T-cell (primary cell): ENCODE measurements at regions of chr1 and their contacts with region 1.

Region 1: GRCh38 chr1:24201941-24202440 is 14.9 kb upstream of the IFNLR1 start:
- DNase-seq: peak in 30 of 35 experiments; percentile 10 to 74 (median 38)
- ATAC-seq: peak in 3 of 4 experiments; percentile 35 to 54 (median 51)
- H3K4me3 ChIP-seq: no peak overlapping the region
- H3K4me3 Mint-ChIP-seq: no peak overlapping the region
- H3K27ac ChIP-seq: no peak overlapping the region
- H3K27ac Mint-ChIP-seq: no peak overlapping the region
- H3K4me1 ChIP-seq: peaks cover 4 to 7% of the 10 kb centered on the region in 2 experiments
- H3K4me1 Mint-ChIP-seq: peaks cover 5 to 13% (median 7%) of the 10 kb centered on the region in 3 donors
- H3K27me3 ChIP-seq: peaks cover 0 to 18% of the 10 kb centered on the region in 2 experiments
- H3K27me3 Mint-ChIP-seq: no peaks in the 10 kb centered on the region

Region 2: DNA sequence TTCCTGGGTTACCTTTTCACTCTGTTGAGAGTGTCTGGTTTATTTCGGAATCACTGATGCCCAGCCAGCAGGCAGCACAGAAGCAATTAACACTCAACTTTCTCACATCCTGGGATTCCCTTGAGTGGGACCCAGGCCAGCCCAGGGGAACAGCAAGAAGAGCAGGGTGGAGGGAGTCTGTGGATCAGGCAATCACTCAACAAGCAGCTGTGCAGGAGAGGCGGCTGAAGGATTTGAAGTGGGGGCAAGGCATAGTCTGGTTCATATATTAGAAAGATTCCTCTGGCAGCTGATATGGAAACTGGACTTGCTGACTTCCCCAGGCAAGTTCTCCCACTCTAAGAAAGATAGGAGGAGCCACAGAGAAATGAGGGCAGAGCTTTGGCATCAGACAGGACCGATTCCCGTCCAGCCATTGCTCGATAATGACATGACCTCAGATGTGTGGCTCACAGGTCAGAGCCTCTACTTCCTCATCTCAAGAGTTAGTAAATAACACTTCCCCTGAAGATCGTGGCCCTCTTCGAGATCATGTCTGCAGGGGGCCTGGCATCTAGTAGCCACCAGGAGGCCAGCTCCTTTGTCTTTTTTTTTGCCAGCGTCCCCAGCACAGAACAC is 1626.3 kb before region 1 on chr1:
- CTCF ChIA-PET with region 1: no interaction called
- POLR2A ChIA-PET with region 1: no interaction called
- DNase-seq: no peak
- ATAC-seq: no peak
- H3K4me3 ChIP-seq: no peak overlapping the region
- H3K4me3 Mint-ChIP-seq: no peak overlapping the region
- H3K27ac ChIP-seq: no peak overlapping the region
- H3K27ac Mint-ChIP-seq: no peak overlapping the region
- H3K4me1 ChIP-seq: no peaks in the 10 kb centered on the region
- H3K4me1 Mint-ChIP-seq: peaks cover 0 to 6% (median 0%) of the 10 kb centered on the region in 3 donors
- H3K27me3 ChIP-seq: peaks cover 0 to 18% of the 10 kb centered on the region in 2 experiments
- H3K27me3 Mint-ChIP-seq: peaks cover 5 to 9% of the 10 kb centered on the region in 2 donors

Region 3: GRCh38 chr1:24142546-24143534 is 59.2 kb before region 1 on chr1 and contains the start of gene IL22RA1:
- CTCF ChIA-PET with region 1: no interaction called
- POLR2A ChIA-PET with region 1: no interaction called
- DNase-seq: no peak
- ATAC-seq: no peak
- H3K4me3 ChIP-seq: no peak within 1 kb of the TSS
- H3K4me3 Mint-ChIP-seq: no peak within 1 kb of the TSS
- H3K27ac ChIP-seq: no peak within 1 kb of the TSS
- H3K27ac Mint-ChIP-seq: no peak within 1 kb of the TSS
- H3K4me1 ChIP-seq: peaks cover 0 to 6% of the 10 kb centered on the region in 2 experiments
- H3K4me1 Mint-ChIP-seq: peaks cover 0 to 4% (median 4%) of the 10 kb centered on the region in 3 donors
- H3K27me3 ChIP-seq: peaks cover 0 to 42% of the 10 kb centered on the region in 2 experiments
- H3K27me3 Mint-ChIP-seq: peaks cover 8 to 18% of the 10 kb centered on the region in 2 donors
- total RNA-seq, gene IL22RA1: 0.13 to 0.15 TPM in 2 of 5 donors, not detected in the others

Region 4: GRCh38 chr1:24186993-24187805 is 14.8 kb before region 1 on chr1 and contains the start of gene IFNLR1:
- CTCF ChIA-PET with region 1: interaction called, 9 to 25 read pairs
- POLR2A ChIA-PET with region 1: interaction called in 1 of 2 experiments, 3 read pairs
- DNase-seq: peak; percentile 29 to 86 (median 57)
- ATAC-seq: peak; percentile 73 to 94 (median 77)
- H3K4me3 ChIP-seq: peak within 1 kb of the TSS; percentile 77 to 87
- H3K4me3 Mint-ChIP-seq: peak within 1 kb of the TSS; percentile 79 to 85 (median 84)
- H3K27ac ChIP-seq: peak within 1 kb of the TSS; percentile 56
- H3K27ac Mint-ChIP-seq: peak within 1 kb of the TSS; percentile 68 to 75
- H3K4me1 ChIP-seq: peaks cover 15 to 59% of the 10 kb centered on the region in 2 experiments
- H3K4me1 Mint-ChIP-seq: peaks cover 41 to 57% (median 46%) of the 10 kb centered on the region in 3 donors
- H3K27me3 ChIP-seq: peaks cover 5 to 6% of the 10 kb centered on the region in 2 experiments
- H3K27me3 Mint-ChIP-seq: no peaks in the 10 kb centered on the region
- total RNA-seq, gene IFNLR1: 2.4 to 7.0 (median 6.0) TPM

Region 5: GRCh38 chr1:24391882-24392603 is 190.1 kb after region 1 on chr1:
- CTCF ChIA-PET with region 1: interaction called, 13 to 196 read pairs
- POLR2A ChIA-PET with region 1: interaction called, 3 to 4 read pairs
- DNase-seq: peak in 30 of 35 experiments; percentile 12 to 77 (median 48)
- ATAC-seq: peak; percentile 67 to 75 (median 72)
- H3K4me3 ChIP-seq: peak overlapping the region in 1 of 2 donors; percentile 20
- H3K4me3 Mint-ChIP-seq: peak overlapping the region; percentile 68 to 83 (median 77)
- H3K27ac ChIP-seq: peak overlapping the region; percentile 93
- H3K27ac Mint-ChIP-seq: peak overlapping the region; percentile 96 to 98
- H3K4me1 ChIP-seq: peaks cover 11 to 22% of the 10 kb centered on the region in 2 experiments
- H3K4me1 Mint-ChIP-seq: peaks cover 29 to 36% (median 30%) of the 10 kb centered on the region in 3 donors
- H3K27me3 ChIP-seq: no peaks in the 10 kb centered on the region
- H3K27me3 Mint-ChIP-seq: no peaks in the 10 kb centered on the region

Region 6: DNA sequence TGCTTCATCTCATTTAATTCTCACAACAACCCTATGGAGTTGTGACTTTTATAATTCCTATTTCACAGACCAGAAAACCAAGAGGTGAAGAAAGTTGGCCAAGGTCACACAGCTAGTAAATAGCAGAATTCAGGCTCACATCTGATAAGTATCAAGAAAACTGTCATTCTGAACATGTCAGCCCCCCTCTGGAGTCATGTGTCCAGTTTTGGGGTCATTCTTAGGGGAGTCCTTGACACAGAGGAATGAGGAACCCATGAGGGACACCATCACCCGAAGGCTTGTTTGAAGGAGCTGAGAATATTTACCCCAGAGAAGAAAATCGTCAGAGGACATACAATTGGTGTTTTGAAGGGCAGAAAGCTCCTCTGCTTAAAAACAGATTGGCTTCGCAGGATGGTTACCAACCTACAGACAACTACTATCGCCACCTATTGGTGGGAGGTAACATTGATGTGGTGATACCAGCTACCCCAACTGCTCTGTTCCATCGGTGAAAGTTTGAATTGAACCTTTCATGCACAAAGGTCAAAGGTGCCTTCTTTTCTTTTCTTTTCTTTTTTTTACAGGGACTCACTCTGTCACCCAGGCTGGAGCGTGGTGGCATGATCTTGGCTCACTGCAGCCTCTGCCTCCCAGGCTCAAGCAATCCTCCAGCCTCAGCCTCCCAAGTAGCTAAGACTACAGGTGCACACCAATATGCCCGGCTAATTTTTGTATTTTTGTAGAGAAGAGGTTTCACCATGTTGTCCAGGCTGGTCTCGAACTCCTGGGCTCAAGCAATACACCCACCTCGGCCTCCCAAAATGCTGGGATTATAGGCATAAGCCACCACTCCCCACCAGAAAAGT is 385.2 kb after region 1 on chr1:
- CTCF ChIA-PET with region 1: interaction called, 4 to 34 read pairs
- POLR2A ChIA-PET with region 1: no interaction called
- DNase-seq: peak in 33 of 35 experiments; percentile 12 to 88 (median 50)
- ATAC-seq: peak; percentile 96 to 99 (median 98)
- H3K4me3 ChIP-seq: no peak overlapping the region
- H3K4me3 Mint-ChIP-seq: no peak overlapping the region
- H3K27ac ChIP-seq: peak overlapping the region; percentile 43
- H3K27ac Mint-ChIP-seq: peak overlapping the region; percentile 79 to 86
- H3K4me1 ChIP-seq: no peaks in the 10 kb centered on the region
- H3K4me1 Mint-ChIP-seq: peaks cover 6 to 9% (median 8%) of the 10 kb centered on the region in 3 donors
- H3K27me3 ChIP-seq: peaks cover 0 to 17% of the 10 kb centered on the region in 2 experiments
- H3K27me3 Mint-ChIP-seq: peaks cover 0 to 7% of the 10 kb centered on the region in 2 donors

Region 7: GRCh38 chr1:24830680-24831272 is 628.8 kb after region 1 on chr1:
- CTCF ChIA-PET with region 1: interaction called, 6 to 18 read pairs
- POLR2A ChIA-PET with region 1: no interaction called
- DNase-seq: peak in 1 of 35 experiments; percentile 74
- ATAC-seq: peak in 2 of 4 experiments; percentile 54 to 63
- H3K4me3 ChIP-seq: no peak overlapping the region
- H3K4me3 Mint-ChIP-seq: no peak overlapping the region
- H3K27ac ChIP-seq: no peak overlapping the region
- H3K27ac Mint-ChIP-seq: no peak overlapping the region
- H3K4me1 ChIP-seq: no peaks in the 10 kb centered on the region
- H3K4me1 Mint-ChIP-seq: no peaks in the 10 kb centered on the region
- H3K27me3 ChIP-seq: no peaks in the 10 kb centered on the region
- H3K27me3 Mint-ChIP-seq: peaks cover 2 to 10% of the 10 kb centered on the region in 2 donors